Activated CD4-positive, alpha-beta T cell treated with anti-CD3 and anti-CD28 coated beads, Interleukin-2, amount 10 ng/mL, durations not matched to agents 7 days and 5 days (primary cell): ENCODE measurements at regions of chr10 and their contacts with region 1.

Region 1: DNA sequence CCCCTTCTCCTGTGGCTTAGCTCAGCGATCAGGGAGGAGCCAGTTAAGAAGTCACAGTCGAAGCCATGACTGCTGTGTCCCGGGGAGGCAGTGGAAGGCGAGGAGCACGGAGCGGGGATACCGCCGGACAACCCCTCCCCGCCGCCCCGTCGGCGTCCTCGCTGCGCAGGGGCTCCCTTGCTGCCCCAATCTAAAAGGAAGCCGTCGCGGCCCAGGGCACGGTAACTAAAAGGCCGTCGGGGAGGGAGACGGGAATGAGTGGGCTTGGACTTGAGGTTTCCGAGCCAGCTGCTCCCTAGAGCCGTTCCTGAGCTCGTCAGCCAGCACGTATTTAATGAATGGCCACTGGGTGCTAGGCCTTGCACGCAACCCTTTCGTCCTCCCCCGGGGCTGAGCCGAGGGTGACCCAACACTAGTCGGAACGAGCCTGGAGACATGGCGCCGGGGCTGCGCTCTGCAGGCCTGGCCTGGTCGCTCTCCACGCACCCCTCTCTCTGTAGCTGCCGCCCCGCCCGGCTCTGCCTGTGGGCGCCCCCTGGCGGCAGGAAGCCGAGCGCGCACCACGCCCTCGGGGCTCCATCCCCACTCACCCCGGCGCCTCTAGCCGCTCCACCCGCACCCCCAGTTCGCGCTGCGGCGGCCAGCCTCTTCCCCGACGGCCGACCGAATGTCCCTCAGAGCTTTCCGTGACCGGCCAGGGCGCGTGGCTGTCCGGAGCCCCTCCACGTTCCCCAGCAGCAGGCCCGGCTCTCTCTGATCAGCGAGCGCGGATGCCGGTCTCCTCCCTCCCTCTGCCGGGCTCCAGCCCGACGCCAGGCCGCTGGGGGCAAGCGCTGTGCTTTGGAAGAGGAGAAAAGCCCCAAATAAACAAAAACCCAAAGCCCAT is 29.3 kb upstream of the KCNK18 start:
- DNase-seq: peak; percentile 52
- H3K4me3 Mint-ChIP-seq: no peak overlapping the region
- H3K27ac Mint-ChIP-seq: no peak overlapping the region
- H3K4me1 Mint-ChIP-seq: peaks cover 10% of the 10 kb centered on the region
- H3K27me3 Mint-ChIP-seq: peaks cover 83% of the 10 kb centered on the region

Region 2: DNA sequence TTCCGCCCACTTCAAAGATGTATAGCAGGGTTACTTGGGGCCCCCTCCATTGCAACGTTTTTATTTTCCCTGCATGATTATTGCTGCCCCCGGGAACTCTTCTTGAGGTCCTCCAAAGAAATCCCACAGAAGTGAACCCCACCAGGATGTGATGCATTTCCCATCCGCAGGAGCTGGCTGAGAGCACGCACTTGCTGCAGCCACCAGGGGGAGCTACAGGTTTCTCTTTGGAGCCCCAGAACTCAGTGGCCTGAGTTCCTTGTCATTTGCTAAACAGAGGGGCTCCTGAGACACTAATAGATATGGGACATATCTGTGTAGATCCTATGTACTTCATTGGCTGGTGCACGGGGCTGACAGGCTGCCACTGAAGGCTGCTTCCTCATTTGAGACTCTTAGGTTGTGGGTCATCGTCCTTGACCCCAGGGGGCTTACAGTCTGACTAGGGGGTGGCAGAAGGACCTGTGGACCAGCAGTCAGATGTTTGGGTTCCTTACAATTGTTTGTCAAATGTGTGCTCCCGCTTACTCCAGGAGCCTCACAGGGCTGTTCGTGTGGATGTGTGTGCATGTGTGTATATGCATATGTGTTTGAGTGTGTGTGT is 371.0 kb before region 1 on chr10:
- CTCF ChIA-PET with region 1: interaction called, 11 read pairs
- POLR2A ChIA-PET with region 1: no interaction called
- DNase-seq: peak; percentile 75
- H3K4me3 Mint-ChIP-seq: no peak overlapping the region
- H3K27ac Mint-ChIP-seq: no peak overlapping the region
- H3K4me1 Mint-ChIP-seq: no peaks in the 10 kb centered on the region
- H3K27me3 Mint-ChIP-seq: peaks cover 4% of the 10 kb centered on the region

Region 3: GRCh38 chr10:117134083-117135025 is 33.7 kb before region 1 on chr10:
- CTCF ChIA-PET with region 1: interaction called, 10 read pairs
- POLR2A ChIA-PET with region 1: no interaction called
- DNase-seq: no peak
- H3K4me3 Mint-ChIP-seq: no peak overlapping the region
- H3K27ac Mint-ChIP-seq: no peak overlapping the region
- H3K4me1 Mint-ChIP-seq: peaks cover 12% of the 10 kb centered on the region
- H3K27me3 Mint-ChIP-seq: peaks cover 82% of the 10 kb centered on the region